H1 (cell line): ENCODE measurements at regions of chr3 and their contacts with region 1.

Region 1: GRCh38 chr3:56459104-56459496 is 9.2 kb downstream of the ERC2 start:
- DNase-seq: no peak
- H3K4me3 ChIP-seq: no peak overlapping the region
- H3K27ac ChIP-seq: no peak overlapping the region
- H3K4me1 ChIP-seq: peaks cover 0 to 8% (median 2%) of the 10 kb centered on the region in 4 experiments; a peak in 2 of 7 replicates
- H3K27me3 ChIP-seq: no peaks in the 10 kb centered on the region
- CTCF ChIP-seq: no peak
- EP300 ChIP-seq: no peak
- POLR2A ChIP-seq: no peak
- RAD21 ChIP-seq: no peak

Region 2: DNA sequence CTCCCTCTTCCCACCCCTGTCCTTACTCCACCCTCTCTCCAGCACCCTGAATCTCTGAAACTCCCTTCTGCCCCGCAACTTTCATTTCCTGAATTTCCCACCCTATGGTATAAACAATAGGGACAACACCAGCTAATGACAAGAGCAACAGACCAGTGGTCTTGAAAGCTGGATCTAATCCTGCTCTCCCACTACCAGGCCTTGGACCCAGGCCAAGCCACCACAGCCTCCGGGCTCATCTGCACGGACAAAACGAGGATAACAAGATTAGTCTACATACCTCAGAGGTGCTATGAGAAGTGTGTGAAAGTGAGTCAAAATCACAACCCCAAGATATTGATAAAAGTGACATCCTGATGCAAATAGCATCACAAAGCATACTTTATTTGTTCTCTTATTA is 119.4 kb before region 1 on chr3:
- CTCF ChIA-PET with region 1: interaction called, 40 read pairs
- POLR2A ChIA-PET with region 1: interaction called, 3 read pairs
- DNase-seq: no peak
- H3K4me3 ChIP-seq: no peak overlapping the region
- H3K27ac ChIP-seq: no peak overlapping the region
- H3K4me1 ChIP-seq: no peaks in the 10 kb centered on the region
- H3K27me3 ChIP-seq: no peaks in the 10 kb centered on the region
- CTCF ChIP-seq: no peak
- EP300 ChIP-seq: no peak
- POLR2A ChIP-seq: no peak
- RAD21 ChIP-seq: no peak